ENCODE measurements at regions of chr1 and their contacts with region 1.

Region 1: DNA sequence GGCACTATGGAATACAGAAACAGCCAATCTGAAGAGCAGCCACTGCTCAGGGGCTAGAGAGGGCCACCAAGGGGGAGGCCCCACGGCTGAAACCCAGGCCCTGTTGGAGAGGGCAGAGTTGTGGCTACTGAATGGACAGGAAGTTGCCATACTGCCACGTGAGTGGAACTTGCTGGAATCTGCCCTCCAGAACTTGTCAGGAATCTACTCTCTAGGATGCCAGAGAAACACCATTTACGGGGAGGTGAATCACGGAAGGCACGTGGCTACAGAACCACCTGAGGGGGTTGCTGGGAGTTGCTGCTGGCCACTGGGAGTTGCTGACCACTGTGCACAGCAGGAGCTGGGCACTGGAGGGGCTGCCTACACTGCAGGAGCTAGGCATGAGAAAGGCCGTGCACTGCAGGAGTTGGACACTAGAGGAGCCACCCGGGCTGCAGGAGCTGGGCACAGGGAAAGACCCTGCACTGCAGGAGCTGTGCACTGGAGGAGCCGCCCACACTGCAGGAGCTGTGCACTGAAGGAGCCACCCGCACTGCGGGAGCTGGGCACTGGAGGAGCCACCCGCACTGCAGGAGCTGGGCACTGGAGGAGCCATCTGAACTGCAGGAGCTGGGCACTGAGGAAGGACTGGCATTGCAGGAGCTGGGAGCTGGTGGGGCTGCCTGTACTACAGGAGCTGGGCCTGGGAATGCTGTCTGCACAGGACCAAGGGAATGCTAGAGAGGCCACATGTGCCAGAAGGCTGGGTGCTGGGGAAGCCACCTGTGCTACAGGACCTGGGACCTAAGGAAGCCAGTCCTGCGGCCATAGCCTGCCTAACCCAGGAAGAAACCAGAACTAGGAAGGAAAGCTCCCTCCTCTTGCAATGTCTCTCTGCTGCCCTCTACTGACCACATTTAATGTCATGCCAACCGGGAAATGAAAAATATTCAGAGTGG is 343.4 kb downstream of the MATN1 start:
- DNase-seq: peak; percentile 85
- H3K4me3 ChIP-seq: peak overlapping the region in 1 of 2 experiments; percentile 28; a peak in 1 of 4 replicates
- H3K27ac ChIP-seq: peak overlapping the region in 1 of 2 experiments; percentile 30; a peak in 1 of 4 replicates
- H3K4me1 ChIP-seq: peaks cover 11 to 36% of the 10 kb centered on the region in 2 experiments; a peak in 3 of 4 replicates
- H3K27me3 ChIP-seq: no peaks in the 10 kb centered on the region
- CTCF ChIP-seq: peak; percentile 78
- EP300 ChIP-seq: no peak
- RAD21 ChIP-seq: peak; percentile 86

Region 2: GRCh38 chr1:30111431-30111830 is 268.5 kb before region 1 on chr1:
- CTCF ChIA-PET with region 1: interaction called, 28 read pairs
- POLR2A ChIA-PET with region 1: no interaction called
- DNase-seq: peak; percentile 76
- H3K4me3 ChIP-seq: no peak overlapping the region
- H3K27ac ChIP-seq: no peak overlapping the region
- H3K4me1 ChIP-seq: peaks cover 0 to 23% of the 10 kb centered on the region in 2 experiments; a peak in 3 of 4 replicates
- H3K27me3 ChIP-seq: no peaks in the 10 kb centered on the region
- CTCF ChIP-seq: peak; percentile 63
- EP300 ChIP-seq: no peak
- RAD21 ChIP-seq: peak; percentile 87

Region 3: DNA sequence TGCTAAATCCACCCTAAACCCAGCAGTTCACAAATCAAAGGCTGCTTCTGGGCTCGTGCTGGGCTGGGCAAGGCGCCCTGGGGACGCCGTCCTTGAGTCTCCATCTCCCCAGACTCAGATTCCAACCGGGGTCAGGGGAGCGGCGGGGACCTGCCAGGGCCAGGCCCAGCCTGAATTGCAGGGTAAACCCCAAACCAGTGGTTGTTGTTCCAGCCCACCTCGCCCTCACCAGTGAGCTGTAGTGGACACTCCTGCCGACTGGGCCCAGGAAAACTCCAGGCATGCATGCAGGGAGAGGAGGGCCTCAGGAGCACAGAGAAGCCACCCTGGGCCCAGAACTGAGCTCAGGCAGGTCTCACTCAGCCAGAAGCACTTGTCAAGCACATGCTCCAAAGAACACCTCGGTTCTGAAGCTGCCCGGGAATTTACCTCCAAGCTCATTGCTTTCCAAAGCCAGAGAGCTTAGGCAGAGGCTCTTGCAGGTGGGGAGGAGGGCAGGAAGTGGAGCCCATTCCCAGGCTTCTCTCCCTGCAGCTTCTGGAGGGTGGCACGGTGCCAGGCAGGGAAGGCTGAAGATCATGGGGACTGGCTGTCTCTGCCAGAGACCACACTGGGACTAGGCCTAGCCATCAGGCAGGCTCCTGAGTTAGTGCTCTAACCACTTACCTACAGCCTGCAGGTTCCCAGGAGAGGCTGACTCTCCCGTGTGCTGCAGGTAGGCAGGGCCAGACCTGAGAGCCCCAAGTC is 93.5 kb before region 1 on chr1:
- CTCF ChIA-PET with region 1: interaction called, 11 read pairs
- POLR2A ChIA-PET with region 1: interaction called, 3 read pairs
- DNase-seq: peak; percentile 74
- H3K4me3 ChIP-seq: no peak overlapping the region
- H3K27ac ChIP-seq: no peak overlapping the region
- H3K4me1 ChIP-seq: peaks cover 0 to 11% of the 10 kb centered on the region in 2 experiments; a peak in 2 of 4 replicates
- H3K27me3 ChIP-seq: no peaks in the 10 kb centered on the region
- CTCF ChIP-seq: no peak
- EP300 ChIP-seq: no peak
- RAD21 ChIP-seq: no peak

Region 4: DNA sequence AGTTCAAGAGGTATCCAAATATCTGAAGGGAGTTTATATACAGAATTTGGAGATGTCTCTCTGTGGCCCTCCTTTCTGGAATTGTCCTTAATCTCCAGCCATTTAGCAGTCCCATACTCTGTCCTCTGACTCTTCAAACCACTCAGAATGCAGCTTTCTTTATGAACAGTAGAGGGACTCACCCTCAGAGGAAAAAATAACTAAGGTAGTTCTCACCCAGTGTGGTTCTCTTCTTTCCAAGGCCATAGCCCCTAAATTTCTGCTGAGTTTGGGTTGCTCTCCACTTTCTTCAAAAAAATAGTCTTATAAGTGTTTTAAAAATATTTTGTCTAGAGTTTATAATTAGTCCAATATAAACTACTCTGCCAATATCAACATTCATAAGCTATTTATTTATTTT is 26.3 kb before region 1 on chr1:
- CTCF ChIA-PET with region 1: interaction called, 42 read pairs
- POLR2A ChIA-PET with region 1: no interaction called
- DNase-seq: no peak
- H3K4me3 ChIP-seq: no peak overlapping the region
- H3K27ac ChIP-seq: no peak overlapping the region
- H3K4me1 ChIP-seq: no peaks in the 10 kb centered on the region
- H3K27me3 ChIP-seq: no peaks in the 10 kb centered on the region
- CTCF ChIP-seq: no peak
- EP300 ChIP-seq: no peak
- RAD21 ChIP-seq: peak; percentile 46

Region 5: DNA sequence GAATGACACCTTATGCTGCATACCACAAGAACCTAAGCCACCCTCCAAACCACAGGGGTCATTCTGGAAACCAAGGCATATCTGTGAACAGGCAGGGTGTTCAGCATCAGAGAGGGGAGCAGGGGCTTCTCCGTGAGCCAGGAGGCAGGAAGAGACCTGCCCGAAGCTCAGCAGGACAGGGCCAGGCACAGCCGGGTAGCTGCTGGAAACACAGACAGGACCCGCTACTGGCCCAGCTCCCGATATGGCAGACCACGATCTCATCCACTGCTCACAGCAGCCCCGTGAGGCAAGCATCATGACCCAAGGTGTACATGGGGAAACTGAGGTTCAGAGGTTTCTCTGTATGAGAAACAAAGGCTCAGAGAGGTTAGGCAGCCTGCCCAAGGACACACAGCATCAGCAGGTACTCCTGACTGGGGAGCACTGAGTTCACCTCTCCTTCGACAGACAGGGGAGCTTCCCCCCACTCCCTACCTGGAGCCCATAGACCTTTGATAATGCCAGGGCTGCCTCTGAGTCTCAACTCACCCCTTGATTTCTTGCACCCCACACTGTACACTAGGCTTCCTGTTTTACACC is 25.8 kb after region 1 on chr1:
- CTCF ChIA-PET with region 1: interaction called, 11 read pairs
- POLR2A ChIA-PET with region 1: no interaction called
- DNase-seq: no peak
- H3K4me3 ChIP-seq: no peak overlapping the region
- H3K27ac ChIP-seq: no peak overlapping the region
- H3K4me1 ChIP-seq: peaks cover 0 to 19% of the 10 kb centered on the region in 2 experiments; a peak in 2 of 4 replicates
- H3K27me3 ChIP-seq: no peaks in the 10 kb centered on the region
- CTCF ChIP-seq: no peak
- EP300 ChIP-seq: no peak
- RAD21 ChIP-seq: no peak

Region 6: GRCh38 chr1:30538226-30538992 is 158.5 kb after region 1 on chr1:
- CTCF ChIA-PET with region 1: no interaction called
- POLR2A ChIA-PET with region 1: no interaction called
- DNase-seq: no peak
- H3K4me3 ChIP-seq: no peak overlapping the region
- H3K27ac ChIP-seq: no peak overlapping the region
- H3K4me1 ChIP-seq: no peaks in the 10 kb centered on the region; a peak in 1 of 4 replicates
- H3K27me3 ChIP-seq: no peaks in the 10 kb centered on the region
- CTCF ChIP-seq: no peak
- EP300 ChIP-seq: no peak
- RAD21 ChIP-seq: no peak

Region 7: DNA sequence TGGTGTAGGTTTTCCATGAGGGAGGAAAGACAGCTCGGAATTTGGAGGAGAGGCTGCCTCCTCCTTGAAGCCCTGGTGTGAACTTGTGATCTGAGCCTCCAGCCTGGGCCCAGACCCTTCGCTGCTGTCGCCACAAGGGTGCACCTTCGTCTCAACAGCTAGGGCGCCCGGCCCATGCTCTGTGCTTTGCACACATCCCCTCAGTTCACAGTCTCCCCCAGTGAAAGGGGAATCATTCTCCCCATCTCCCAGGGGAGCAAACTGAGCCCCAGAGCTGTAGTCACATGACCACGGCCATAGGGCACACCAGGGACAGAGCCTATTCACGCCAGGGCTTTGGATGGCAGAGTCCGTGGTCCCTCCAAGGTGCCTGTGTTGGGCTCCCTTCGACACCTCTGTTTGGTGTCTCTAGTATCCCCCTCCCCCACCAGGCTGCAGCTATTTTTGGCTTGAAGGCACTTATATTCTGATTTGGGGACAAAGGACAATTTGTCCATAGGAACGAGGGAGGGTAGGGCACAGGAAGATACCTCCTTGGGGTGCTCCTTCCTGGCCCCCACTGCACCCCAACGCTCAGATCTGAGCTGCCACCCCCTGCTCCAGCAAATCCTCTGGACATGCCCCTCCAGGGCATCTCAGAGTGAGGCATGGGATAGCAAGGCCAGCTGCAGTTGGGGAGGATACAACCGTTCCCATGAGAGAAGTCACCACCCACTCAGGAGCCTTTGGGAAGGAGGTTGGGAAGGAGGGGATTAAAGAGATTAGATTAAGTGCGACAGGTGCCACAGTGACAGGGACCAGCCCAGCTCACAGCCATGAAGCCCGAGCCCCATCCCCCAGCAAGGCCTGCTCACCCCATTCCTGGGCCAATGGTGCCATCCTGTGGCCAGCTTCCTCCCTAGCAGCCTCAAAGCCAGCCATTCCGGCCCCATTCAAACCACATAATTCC is 327.7 kb after region 1 on chr1:
- CTCF ChIA-PET with region 1: interaction called, 26 read pairs
- POLR2A ChIA-PET with region 1: no interaction called
- DNase-seq: peak; percentile 90
- H3K4me3 ChIP-seq: no peak overlapping the region; a peak in 1 of 4 replicates
- H3K27ac ChIP-seq: peak overlapping the region in 1 of 2 experiments; percentile 16; a peak in 1 of 4 replicates
- H3K4me1 ChIP-seq: peaks cover 0 to 16% of the 10 kb centered on the region in 2 experiments; a peak in 2 of 4 replicates
- H3K27me3 ChIP-seq: no peaks in the 10 kb centered on the region; the same call in 1 of the 2 replicates
- CTCF ChIP-seq: peak; percentile 92
- EP300 ChIP-seq: no peak; a peak in 1 of 4 replicates
- RAD21 ChIP-seq: peak; percentile 100

Measured in SK-N-SH (cell line).